Activated naive CD4-positive, alpha-beta T cell treated with anti-CD3 and anti-CD28 coated beads for 36 hours (primary cell): ENCODE measurements at regions of chr17 and their contacts with region 1.

Region 1: GRCh38 chr17:48374650-48375230 is 55.3 kb downstream of the SKAP1 start:
- DNase-seq: peak; percentile 47
- H3K4me3 Mint-ChIP-seq: no peak overlapping the region
- H3K27ac Mint-ChIP-seq: no peak overlapping the region
- H3K4me1 Mint-ChIP-seq: peaks cover 29% of the 10 kb centered on the region
- H3K27me3 Mint-ChIP-seq: no peaks in the 10 kb centered on the region

Region 2: GRCh38 chr17:48162946-48163506 is 211.7 kb before region 1 on chr17:
- CTCF ChIA-PET with region 1: no interaction called
- intact Hi-C with region 1: no loop called
- DNase-seq: no peak
- H3K4me3 Mint-ChIP-seq: no peak overlapping the region
- H3K27ac Mint-ChIP-seq: no peak overlapping the region
- H3K4me1 Mint-ChIP-seq: peaks cover 17% of the 10 kb centered on the region
- H3K27me3 Mint-ChIP-seq: no peaks in the 10 kb centered on the region

Region 3: DNA sequence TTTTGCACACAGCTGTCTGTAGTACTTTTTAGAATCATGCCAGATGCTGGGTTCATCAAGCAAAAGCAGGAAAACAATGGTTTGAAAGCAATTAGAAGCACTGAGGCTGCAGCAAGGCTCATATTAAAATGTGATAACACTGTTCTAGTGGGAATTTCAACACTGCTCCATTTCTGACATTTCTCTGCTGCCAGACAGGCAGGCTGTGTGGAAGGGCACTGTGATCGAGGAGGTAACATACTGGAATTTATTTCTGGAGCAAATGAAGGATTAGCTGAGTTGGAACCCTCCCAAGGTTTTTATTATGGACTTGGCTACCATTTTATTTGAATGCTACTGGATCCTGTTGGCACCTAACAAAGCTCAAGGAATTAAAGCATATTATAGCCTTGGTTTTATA is 11.6 kb before region 1 on chr17:
- CTCF ChIA-PET with region 1: interaction called, 32 read pairs
- intact Hi-C with region 1: no loop called
- DNase-seq: no peak
- H3K4me3 Mint-ChIP-seq: no peak overlapping the region
- H3K27ac Mint-ChIP-seq: no peak overlapping the region
- H3K4me1 Mint-ChIP-seq: peaks cover 14% of the 10 kb centered on the region
- H3K27me3 Mint-ChIP-seq: no peaks in the 10 kb centered on the region

Region 4: DNA sequence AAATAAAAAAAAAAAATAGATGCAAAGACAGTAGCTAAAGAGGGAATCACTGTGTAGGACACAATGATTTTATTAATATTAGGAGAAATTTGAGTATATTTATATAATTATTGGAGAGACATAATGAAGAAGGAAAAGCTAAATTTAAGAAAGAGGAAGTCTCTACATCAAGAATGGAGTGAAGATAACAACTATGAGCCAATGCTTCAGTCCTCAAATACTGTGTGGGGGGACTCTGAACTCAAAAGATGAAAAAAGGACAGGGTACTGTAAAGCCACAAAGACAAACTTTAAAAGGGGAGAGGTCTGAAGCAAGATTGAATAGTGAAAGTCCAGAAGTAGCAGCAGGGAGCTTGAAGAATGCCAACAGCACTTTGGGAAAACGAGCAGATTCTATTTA is 10.6 kb after region 1 on chr17:
- CTCF ChIA-PET with region 1: interaction called, 11 read pairs
- intact Hi-C with region 1: no loop called
- DNase-seq: no peak
- H3K4me3 Mint-ChIP-seq: no peak overlapping the region
- H3K27ac Mint-ChIP-seq: no peak overlapping the region
- H3K4me1 Mint-ChIP-seq: peaks cover 39% of the 10 kb centered on the region
- H3K27me3 Mint-ChIP-seq: no peaks in the 10 kb centered on the region